Transverse colon (tissue), 4 donors: ENCODE measurements at regions of chr11 and their contacts with region 1.

Region 1: DNA sequence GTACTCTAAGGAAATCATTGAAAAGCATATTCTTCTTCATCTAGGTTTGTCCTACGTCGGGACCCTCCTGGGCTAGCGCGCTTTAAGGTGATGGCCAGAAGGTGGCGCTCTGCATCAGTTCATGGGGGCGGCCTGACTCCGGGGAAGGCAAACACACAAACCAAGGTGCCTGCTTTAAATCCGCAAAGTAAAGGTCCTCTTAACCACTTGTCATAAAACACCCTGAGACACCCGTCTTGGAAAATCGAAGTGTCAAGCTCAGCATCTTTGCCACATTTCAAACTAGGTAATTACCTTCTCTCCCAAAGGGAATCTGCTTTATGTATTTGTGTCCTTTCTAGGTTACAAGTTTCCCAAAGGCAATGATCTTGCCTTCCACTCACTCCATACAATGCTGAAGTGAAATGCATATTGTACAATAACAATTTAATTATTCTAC is 33.9 kb downstream of the LMO2 start:
- DNase-seq: peak; percentile 74
- H3K4me3 ChIP-seq: no peak overlapping the region
- H3K27ac ChIP-seq: no peak overlapping the region
- H3K4me1 ChIP-seq: no peaks in the 10 kb centered on the region
- H3K27me3 ChIP-seq: peaks cover 9% of the 10 kb centered on the region
- CTCF ChIP-seq: peak; percentile 71 to 86 (median 82)
- EP300 ChIP-seq: no peak
- POLR2A ChIP-seq: no peak

Region 2: DNA sequence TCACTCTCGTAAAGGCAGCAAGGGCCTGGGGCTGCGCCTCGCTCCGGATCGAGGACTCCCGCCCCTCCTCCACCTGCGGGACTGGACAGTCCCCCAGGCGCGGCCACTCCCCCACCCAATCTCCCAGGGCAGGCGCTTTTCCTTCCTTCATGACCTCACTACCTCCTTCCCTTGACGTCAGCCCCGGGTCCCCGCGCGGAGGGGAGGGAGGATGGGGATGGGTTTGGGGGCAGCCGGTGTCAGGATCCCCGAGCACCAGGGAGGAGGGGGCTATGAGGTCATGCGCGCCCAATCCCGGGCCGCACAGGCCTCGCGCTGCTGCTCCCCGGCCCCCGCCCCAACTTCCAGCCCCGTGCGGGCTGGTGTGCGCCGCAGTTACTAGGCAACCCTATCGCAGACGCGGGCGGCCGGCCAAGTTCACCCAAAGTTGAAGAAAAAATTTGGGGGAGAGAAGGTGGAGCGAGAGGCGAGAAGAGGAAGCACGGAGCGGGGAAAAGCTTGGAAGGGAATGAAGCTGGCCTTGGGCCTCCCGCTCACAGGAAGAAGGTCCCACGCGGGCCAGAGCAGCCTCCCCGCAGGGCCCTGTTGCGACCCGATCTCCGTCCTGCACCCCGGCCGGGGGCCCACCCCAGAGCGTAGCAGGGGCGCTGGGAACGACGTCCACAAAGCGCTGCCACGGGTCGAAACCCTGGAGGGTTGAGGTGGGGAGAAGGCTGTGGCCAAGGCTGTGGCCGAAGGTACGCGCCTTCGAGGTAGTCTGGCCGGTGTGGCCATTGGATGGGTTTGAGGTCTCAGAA is 1430.9 kb before region 1 on chr11:
- in situ Hi-C with region 1: no loop called
- intact Hi-C with region 1: loop called (anchors 5 kb)
- DNase-seq: no peak
- H3K4me3 ChIP-seq: no peak overlapping the region
- H3K27ac ChIP-seq: no peak overlapping the region
- H3K4me1 ChIP-seq: peaks cover 0 to 8% (median 3%) of the 10 kb centered on the region in 4 donors
- H3K27me3 ChIP-seq: peaks cover 97% of the 10 kb centered on the region
- CTCF ChIP-seq: no peak
- EP300 ChIP-seq: no peak
- POLR2A ChIP-seq: no peak

Region 3: GRCh38 chr11:33970984-33971466 is 113.1 kb after region 1 on chr11:
- in situ Hi-C with region 1: loop called in 2 of 4 experiments (anchors 5 to 10 kb)
- intact Hi-C with region 1: loop called (anchors 5 kb)
- DNase-seq: peak; percentile 32
- H3K4me3 ChIP-seq: no peak overlapping the region
- H3K27ac ChIP-seq: no peak overlapping the region
- H3K4me1 ChIP-seq: peaks cover 0 to 4% (median 0%) of the 10 kb centered on the region in 4 donors
- H3K27me3 ChIP-seq: peaks cover 4% of the 10 kb centered on the region
- CTCF ChIP-seq: peak; percentile 43 to 60 (median 49)
- EP300 ChIP-seq: no peak
- POLR2A ChIP-seq: no peak

Region 4: DNA sequence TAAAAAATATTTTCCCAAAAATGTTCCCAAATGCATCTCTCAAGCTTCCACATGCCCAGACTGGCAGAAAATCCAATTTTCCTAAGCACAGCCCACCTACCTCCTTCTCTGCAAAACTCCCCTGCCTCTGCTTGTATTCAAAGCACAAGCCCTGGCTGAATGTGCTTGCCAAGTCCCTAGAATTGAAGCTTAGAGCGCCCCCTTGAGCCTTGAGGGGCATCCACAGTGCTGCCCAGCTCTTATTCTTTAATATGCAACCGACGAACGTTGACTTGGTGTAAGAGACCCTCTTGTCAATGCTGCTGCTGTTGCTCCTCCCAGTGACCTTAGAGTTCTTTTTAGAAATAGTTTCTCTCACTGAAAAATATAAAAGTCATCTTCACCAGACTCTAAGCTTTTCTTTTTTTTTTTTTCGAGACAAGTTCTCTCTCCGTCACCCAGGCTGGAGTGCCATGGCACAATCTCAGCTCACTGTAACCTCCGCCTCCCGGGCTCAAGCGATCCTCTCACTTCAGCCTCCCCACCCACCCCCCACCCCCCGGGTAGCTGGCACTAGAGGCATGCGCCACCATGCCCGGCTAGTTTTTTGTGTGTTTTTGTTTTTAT is 130.1 kb after region 1 on chr11:
- in situ Hi-C with region 1: loop called in 2 of 4 experiments (anchors 5 to 10 kb)
- intact Hi-C with region 1: no loop called
- DNase-seq: peak; percentile 67
- H3K4me3 ChIP-seq: no peak overlapping the region
- H3K27ac ChIP-seq: no peak overlapping the region
- H3K4me1 ChIP-seq: no peaks in the 10 kb centered on the region
- H3K27me3 ChIP-seq: no peaks in the 10 kb centered on the region
- CTCF ChIP-seq: peak; percentile 59 to 77 (median 74)
- EP300 ChIP-seq: no peak
- POLR2A ChIP-seq: no peak

Region 5: DNA sequence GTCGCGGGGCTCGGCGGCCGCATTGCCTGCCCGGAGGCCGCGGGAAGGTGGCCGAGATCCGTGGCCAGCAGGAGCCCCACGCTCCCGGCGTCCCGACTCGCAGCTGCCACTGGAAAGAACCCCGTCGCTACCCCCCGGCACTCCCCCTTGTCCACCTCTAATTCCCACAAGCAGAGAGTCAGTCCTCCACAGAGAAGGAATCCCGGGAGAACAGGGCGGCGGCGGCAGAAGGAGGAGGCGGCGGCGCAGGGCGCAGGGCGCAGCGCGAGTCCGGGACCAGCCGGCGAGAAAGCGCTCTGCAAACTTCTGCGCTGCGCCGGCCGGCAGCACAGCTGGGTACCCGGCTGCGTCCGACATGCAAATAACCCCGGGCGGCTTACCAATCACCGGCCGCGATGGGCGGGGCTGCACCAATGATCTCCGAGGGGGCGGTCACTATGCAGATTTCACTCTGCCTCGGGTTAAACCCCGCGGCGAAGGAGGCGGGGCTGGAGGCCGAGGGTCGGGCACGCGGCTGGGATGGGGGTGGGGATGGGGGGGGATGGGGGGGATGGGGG is 499.8 kb after region 1 on chr11 and contains the start of gene ABTB2:
- in situ Hi-C with region 1: loop called in 2 of 4 experiments (anchors 10 to 25 kb)
- intact Hi-C with region 1: no loop called
- DNase-seq: peak; percentile 99
- H3K4me3 ChIP-seq: peak within 1 kb of the TSS; percentile 41 to 62 (median 47)
- H3K27ac ChIP-seq: peak within 1 kb of the TSS; percentile 76 to 91 (median 84)
- H3K4me1 ChIP-seq: peaks cover 13 to 26% (median 22%) of the 10 kb centered on the region in 4 donors
- H3K27me3 ChIP-seq: peaks cover 15% of the 10 kb centered on the region
- CTCF ChIP-seq: no peak
- EP300 ChIP-seq: no peak
- POLR2A ChIP-seq: peak; percentile 96
- total RNA-seq, gene ABTB2: 0.60 to 41.9 (median 20.7) TPM

Region 6: GRCh38 chr11:34366522-34366921 is 508.6 kb after region 1 on chr11:
- in situ Hi-C with region 1: loop called in 2 of 4 experiments (anchors 10 to 25 kb)
- intact Hi-C with region 1: no loop called
- DNase-seq: peak; percentile 35
- H3K4me3 ChIP-seq: no peak overlapping the region
- H3K27ac ChIP-seq: no peak overlapping the region
- H3K4me1 ChIP-seq: no peaks in the 10 kb centered on the region
- H3K27me3 ChIP-seq: no peaks in the 10 kb centered on the region
- CTCF ChIP-seq: peak; percentile 12 to 40 (median 31)
- EP300 ChIP-seq: no peak
- POLR2A ChIP-seq: no peak